ENCODE measurements at regions of chr11 and their contacts with region 1.

Region 1: GRCh38 chr11:103624708-103625623 is 411.5 kb upstream of the DDI1 start:
- DNase-seq: peak; percentile 99
- H3K4me3 ChIP-seq: peak overlapping the region in 1 of 3 experiments; percentile 28
- H3K27ac ChIP-seq: peak overlapping the region; percentile 100
- H3K4me1 ChIP-seq: peaks cover 32% of the 10 kb centered on the region
- H3K27me3 ChIP-seq: no peaks in the 10 kb centered on the region
- CTCF ChIP-seq: no peak
- POLR2A ChIP-seq: peak; percentile 91

Region 2: GRCh38 chr11:101914738-101915426 is 1710.1 kb before region 1 on chr11 and contains the start of gene CEP126:
- CTCF ChIA-PET with region 1: no interaction called
- POLR2A ChIA-PET with region 1: no interaction called
- dilution Hi-C with region 1: no loop called
- intact Hi-C with region 1: loop called (anchors 5 kb)
- DNase-seq: peak; percentile 99
- H3K4me3 ChIP-seq: peak within 1 kb of the TSS; percentile 13 to 81 (median 73)
- H3K27ac ChIP-seq: peak within 1 kb of the TSS; percentile 100
- H3K4me1 ChIP-seq: peaks cover 42% of the 10 kb centered on the region
- H3K27me3 ChIP-seq: no peaks in the 10 kb centered on the region
- CTCF ChIP-seq: peak; percentile 32 to 59
- POLR2A ChIP-seq: peak; percentile 79
- total RNA-seq, gene CEP126: 5.8 and 9.1 TPM in 2 replicates

Region 3: GRCh38 chr11:103091801-103092524 is 533.0 kb before region 1 on chr11 and contains the start of gene DCUN1D5:
- CTCF ChIA-PET with region 1: no interaction called
- POLR2A ChIA-PET with region 1: no interaction called
- dilution Hi-C with region 1: no loop called
- intact Hi-C with region 1: loop called (anchors 5 kb)
- DNase-seq: peak; percentile 96
- H3K4me3 ChIP-seq: peak within 1 kb of the TSS; percentile 64 to 94 (median 73)
- H3K27ac ChIP-seq: peak within 1 kb of the TSS; percentile 70
- H3K4me1 ChIP-seq: peaks cover 22% of the 10 kb centered on the region
- H3K27me3 ChIP-seq: peaks cover 0 to 4% of the 10 kb centered on the region in 2 experiments
- CTCF ChIP-seq: no peak
- POLR2A ChIP-seq: peak; percentile 97
- total RNA-seq, gene DCUN1D5: 49.8 and 52.9 TPM in 2 replicates

Region 4: DNA sequence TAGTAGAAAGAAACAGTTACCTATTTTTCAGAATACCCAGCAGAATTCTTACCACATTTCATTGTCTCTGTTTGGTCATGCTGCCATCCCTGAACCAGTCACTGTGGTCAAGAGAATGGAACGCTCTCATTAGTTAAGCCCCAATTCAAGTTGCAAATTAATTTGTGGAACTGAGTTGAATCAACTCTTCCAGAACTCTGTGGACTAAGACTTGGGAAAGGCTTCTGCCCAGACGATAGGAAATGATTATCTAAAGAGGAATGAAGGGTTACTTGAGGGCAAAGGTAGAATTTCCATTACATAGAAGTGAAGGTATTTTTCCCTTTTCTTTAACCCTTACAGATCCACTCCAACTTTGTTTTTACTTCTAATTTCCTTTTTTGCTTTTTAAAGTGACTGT is 229.4 kb before region 1 on chr11:
- CTCF ChIA-PET with region 1: no interaction called
- POLR2A ChIA-PET with region 1: no interaction called
- dilution Hi-C with region 1: no loop called
- intact Hi-C with region 1: no loop called
- DNase-seq: peak; percentile 41
- H3K4me3 ChIP-seq: no peak overlapping the region
- H3K27ac ChIP-seq: peak overlapping the region; percentile 32
- H3K4me1 ChIP-seq: peaks cover 8% of the 10 kb centered on the region
- H3K27me3 ChIP-seq: no peaks in the 10 kb centered on the region
- CTCF ChIP-seq: no peak
- POLR2A ChIP-seq: no peak

Region 5: DNA sequence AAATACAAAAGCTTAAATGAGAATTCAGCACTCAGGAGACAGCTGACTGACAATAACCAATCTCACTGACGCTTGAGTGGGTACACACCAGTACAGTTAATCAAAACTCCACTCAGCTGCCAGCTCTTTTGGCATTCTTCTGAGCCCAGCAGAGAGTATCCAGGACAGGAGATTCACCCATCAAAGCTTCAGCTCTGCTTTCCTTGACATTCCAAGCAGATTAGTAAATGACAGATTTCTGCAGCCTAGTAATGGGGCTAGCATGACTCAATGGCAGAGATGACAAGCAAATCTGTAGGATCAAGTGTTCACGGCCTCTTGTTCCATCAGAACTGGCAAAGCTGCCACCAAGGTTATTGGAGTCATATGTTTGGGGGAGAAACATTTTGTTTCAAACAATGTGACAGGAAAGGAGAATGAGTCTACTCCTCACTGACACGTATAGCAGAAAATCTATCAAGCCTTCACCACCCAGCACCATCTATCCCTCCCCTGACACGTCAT is 95.7 kb before region 1 on chr11:
- CTCF ChIA-PET with region 1: no interaction called
- POLR2A ChIA-PET with region 1: interaction called, 6 read pairs
- dilution Hi-C with region 1: no loop called
- intact Hi-C with region 1: loop called (anchors 1 kb)
- DNase-seq: peak; percentile 75
- H3K4me3 ChIP-seq: no peak overlapping the region
- H3K27ac ChIP-seq: peak overlapping the region; percentile 95
- H3K4me1 ChIP-seq: peaks cover 72% of the 10 kb centered on the region
- H3K27me3 ChIP-seq: no peaks in the 10 kb centered on the region
- CTCF ChIP-seq: no peak
- POLR2A ChIP-seq: peak; percentile 42

Region 6: GRCh38 chr11:103682318-103683184 is 57.6 kb after region 1 on chr11:
- CTCF ChIA-PET with region 1: interaction called, 6 read pairs
- POLR2A ChIA-PET with region 1: no interaction called
- dilution Hi-C with region 1: no loop called
- intact Hi-C with region 1: loop called (anchors 1 kb)
- DNase-seq: peak; percentile 86
- H3K4me3 ChIP-seq: no peak overlapping the region
- H3K27ac ChIP-seq: no peak overlapping the region
- H3K4me1 ChIP-seq: peaks cover 19% of the 10 kb centered on the region
- H3K27me3 ChIP-seq: no peaks in the 10 kb centered on the region
- CTCF ChIP-seq: peak; percentile 67 to 81
- POLR2A ChIP-seq: no peak

Region 7: GRCh38 chr11:104164028-104164520 is 539.1 kb after region 1 on chr11 and contains the start of gene PDGFD:
- CTCF ChIA-PET with region 1: no interaction called
- POLR2A ChIA-PET with region 1: no interaction called
- dilution Hi-C with region 1: no loop called
- intact Hi-C with region 1: loop called (anchors 1 kb)
- DNase-seq: peak; percentile 89
- H3K4me3 ChIP-seq: peak within 1 kb of the TSS; percentile 66 to 94 (median 93)
- H3K27ac ChIP-seq: peak within 1 kb of the TSS; percentile 52
- H3K4me1 ChIP-seq: peaks cover 10% of the 10 kb centered on the region
- H3K27me3 ChIP-seq: no peaks in the 10 kb centered on the region
- CTCF ChIP-seq: peak; percentile 57 to 73
- POLR2A ChIP-seq: no peak
- total RNA-seq, gene PDGFD: 13.1 and 14.1 TPM in 2 replicates

Region 8: DNA sequence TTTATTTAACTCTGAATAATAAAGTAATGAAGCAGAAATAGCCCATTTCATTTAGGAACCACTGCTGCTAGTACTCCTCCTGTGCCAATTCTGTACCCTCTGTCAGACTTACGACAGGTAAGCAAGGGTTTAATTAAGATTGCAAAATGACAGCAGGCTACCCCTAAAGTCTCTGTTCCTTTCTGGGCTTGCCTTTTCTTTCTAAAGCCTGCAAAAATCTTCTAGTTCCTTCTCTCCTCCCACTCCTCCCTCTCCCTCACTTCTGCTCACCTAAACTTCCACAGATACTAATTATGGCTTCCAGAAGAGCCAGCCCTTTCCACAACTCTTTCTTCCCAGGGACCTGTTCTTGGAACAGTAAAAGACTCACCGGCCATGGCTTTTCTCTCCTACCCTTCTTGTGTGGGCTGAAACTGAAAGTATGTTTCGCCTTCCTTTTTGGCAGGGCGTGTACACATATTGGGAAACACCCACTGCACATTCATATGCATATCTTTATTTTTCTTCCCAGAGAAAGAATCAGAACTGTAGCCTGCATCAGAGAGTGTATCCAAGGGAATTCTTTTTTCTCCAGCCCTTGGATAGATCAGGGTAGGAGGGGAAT is 1420.1 kb after region 1 on chr11 and contains the start of gene CARD16:
- CTCF ChIA-PET with region 1: no interaction called
- POLR2A ChIA-PET with region 1: no interaction called
- dilution Hi-C with region 1: no loop called
- intact Hi-C with region 1: loop called (anchors 10 kb)
- DNase-seq: peak; percentile 74
- H3K4me3 ChIP-seq: peak within 1 kb of the TSS; percentile 36 to 83 (median 62)
- H3K27ac ChIP-seq: peak within 1 kb of the TSS; percentile 88
- H3K4me1 ChIP-seq: peaks cover 41% of the 10 kb centered on the region
- H3K27me3 ChIP-seq: no peaks in the 10 kb centered on the region
- CTCF ChIP-seq: no peak
- POLR2A ChIP-seq: no peak
- total RNA-seq, gene CARD16: 68.7 and 76.6 TPM in 2 replicates